ENCODE measurements at regions of chr21 and their contacts with region 1.

Region 1: DNA sequence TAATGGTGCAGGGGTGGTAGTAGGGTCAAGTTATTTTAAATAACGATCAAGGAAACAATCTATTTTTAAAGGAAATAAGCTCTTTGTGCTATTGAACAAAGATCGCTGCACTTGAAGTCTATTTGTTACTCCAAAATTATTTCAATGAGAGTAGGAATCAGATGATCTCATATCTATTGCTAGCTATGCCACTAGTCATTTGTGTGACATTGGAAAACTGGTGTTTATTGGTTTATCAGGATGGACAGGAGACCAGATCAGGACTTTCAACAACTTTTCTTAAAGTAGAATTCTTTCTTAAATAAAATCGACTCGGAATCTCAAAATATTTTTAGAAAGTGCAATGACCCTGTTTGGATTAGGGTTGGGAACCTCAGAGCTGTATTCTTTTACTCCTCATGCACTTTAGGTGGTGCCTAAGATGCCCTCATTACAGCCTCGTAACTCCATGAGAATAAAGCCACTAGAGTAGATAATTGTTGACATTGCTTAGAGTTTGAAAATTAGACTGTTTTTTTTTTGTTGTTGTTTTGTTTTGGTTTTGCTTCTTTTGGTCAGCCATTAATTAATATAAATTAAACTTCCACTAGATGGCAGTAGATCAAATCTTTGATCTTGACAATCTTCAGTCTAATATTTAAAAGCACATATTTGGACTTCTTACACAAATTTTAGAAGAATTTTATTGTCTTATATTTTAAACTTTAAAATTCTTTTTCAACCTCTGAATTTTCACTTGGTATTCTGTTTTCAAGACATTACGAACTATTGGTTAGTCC is 352.4 kb downstream of the USP25 start:
- DNase-seq: no peak

Region 2: DNA sequence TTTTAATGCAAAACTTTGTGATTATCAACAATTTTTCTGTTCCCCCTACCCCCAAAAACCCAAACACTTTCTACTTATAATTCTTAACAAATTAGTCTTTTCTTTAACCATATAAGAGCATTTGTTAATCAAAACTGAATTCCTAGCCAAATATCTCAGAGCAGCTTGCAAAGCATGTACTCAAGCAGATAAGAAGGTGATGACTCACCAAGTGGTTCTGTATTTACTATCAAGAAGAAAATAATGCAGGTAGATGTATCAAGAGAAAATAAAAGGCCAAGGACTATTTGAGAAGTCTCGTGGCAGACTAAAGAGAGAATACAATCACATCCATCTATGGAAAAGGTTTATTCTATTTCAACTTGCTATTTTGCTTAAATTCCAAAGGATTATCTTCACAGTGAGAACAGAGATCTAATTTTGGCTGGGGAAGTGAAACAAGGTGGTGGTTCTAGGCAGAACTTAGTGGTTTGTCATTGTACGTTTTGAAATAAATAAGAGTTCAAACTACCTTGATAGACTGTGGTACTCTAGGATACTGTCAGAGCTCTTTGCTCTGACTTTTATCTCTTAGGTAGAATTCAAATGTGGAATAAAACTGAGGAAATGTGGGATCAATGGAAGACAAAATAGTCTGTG is 922.7 kb before region 1 on chr21:
- intact Hi-C with region 1: no loop called
- DNase-seq: no peak

Region 3: DNA sequence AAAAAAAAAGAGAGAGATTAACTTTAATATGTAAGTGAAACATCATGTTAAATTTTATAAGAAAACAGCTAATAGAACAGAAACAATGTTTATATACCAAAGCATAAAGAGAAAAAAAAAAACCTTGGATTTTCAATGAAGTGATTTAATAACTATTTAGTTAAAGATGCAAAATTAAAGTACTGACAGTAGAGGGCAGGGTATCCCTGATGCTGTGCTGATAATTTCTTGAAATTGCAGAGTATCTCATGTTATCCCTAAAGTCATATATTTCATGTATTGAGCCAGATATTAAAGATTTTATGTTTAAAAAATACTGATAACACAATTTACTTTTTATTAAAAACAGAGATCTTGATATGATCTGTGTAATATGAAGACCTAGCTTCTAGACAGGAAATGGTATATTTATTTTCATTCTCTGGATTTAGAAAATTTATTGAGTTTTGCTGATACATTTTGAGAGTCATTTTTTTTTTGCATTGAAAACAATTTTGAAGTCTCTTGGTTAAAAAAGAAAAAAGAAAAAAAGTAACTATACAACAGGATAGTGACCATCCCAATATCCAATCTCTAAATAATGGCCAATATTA is 79.3 kb before region 1 on chr21:
- intact Hi-C with region 1: no loop called
- DNase-seq: no peak

Region 4: GRCh38 chr21:16040601-16041000 is 41.6 kb before region 1 on chr21:
- intact Hi-C with region 1: no loop called
- DNase-seq: no peak

Region 5: DNA sequence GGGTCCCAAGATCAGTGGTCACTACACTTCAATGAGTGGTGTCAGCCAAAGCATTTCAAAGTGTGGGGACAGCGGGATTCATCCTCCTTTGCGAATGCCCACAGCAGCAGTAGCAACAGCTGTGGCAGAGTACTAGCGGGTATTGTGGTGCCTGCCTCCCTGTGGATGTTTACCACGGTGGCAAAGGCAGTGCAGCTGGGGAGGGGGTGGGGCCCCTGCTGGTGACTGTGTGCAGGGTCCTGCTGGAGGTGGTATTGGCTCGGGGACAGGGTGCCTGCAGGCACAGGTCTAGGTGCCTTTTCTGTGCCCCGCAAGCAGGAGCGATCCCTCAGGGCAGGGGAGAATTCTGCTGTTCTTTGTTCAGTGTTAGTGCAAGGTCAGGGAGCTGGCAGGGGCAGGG is 63.3 kb after region 1 on chr21:
- intact Hi-C with region 1: no loop called
- DNase-seq: peak in 2 of 10 donors; percentile 29 to 68

Region 6: DNA sequence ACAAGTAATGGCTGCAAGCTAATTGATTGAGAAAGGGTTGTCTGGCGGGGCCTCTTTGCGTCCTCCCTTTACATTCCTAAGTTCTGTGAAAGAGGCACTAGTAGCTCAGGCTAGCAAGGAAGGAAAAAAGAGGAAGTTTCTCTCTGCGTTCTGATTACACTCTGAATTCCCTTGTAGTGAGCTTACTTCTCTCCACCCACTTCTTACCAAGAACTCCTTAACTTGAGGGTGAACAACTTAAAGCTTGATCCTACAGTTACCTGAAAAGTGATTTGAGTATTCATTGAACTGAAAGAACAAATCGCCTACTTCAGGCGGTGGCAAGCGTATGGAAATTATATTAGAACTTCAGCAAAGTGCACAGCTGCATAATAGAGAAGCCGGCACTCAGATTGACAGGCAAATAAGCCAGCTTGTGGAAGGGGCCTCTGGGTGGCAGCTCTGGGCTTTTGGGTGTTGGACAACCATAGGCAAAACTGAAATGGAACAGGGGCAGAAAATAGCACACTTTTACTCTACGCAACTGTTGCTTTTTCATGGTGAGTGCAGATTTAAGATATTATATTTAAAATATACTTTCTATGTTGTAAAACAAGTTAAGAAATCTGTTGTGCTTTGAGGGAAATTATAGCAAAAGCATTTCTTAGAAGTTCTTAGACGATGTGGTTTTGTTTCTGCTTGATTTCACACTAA is 112.0 kb after region 1 on chr21:
- intact Hi-C with region 1: loop called (anchors 5 kb)
- DNase-seq: peak; percentile 40 to 95 (median 71)

Region 7: DNA sequence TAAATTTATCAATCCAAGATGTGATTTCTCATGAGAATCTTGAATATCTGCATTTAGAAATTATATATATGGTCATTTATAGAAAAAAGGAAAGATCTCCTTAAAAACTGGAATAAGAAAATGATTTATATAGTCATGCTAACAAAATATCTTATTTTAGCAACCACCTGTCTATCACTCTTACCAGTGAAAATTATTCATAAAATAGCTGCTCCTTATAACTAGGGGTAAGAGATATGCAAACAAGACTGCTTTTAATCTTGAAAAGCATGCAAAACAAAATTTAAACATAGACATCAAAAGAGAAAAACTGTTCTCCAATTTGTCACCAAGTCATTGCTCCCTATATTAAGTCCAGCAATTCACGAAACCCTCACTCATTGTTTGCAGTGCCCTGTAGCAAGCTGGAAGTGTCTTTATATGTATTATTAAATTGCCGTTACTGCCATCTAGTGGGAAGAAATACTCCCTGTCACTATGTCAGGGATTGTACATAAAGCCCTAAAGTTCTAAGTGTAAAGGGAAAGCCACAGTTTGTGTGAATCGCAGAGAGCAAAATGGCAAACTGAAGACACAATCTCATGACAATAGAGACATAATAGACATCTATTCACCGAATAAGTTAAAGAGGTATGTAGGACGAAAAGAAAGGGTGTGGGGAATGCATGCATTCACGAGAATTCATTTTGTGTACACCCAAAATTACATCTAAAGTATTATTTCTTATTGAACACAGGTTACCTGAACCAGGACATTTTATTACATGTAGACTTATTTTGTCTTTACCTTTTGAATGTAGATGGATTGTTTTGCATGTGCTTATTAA is 248.1 kb after region 1 on chr21:
- intact Hi-C with region 1: loop called (anchors 2 kb)
- DNase-seq: peak in 1 of 10 donors; percentile 20

Region 8: DNA sequence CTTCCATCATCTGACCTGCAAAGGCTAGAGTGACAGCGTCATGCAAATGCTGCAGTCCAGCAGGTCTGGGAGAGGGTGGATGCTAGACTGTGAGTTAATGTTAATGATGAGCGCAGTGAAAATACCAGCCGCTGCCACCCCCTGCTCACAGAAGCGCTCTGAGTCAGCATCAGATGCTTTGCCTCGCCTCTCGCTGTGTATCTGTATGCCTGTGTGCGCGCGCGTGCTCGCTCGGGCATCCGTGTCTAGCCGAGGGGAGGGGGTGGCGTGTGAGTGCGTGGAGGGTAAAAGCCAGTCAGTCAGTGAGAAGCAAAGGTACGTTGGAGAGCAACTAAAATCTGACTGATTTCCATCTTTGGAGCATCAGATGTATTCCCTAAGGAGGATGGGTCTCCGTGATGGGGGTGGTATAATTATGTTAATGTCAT is 506.2 kb after region 1 on chr21:
- intact Hi-C with region 1: loop called (anchors 10 kb)
- DNase-seq: peak; percentile 83 to 98 (median 90)